ENCODE measurements at regions of chr10 and their contacts with region 1.

Region 1: GRCh38 chr10:96986200-96986856 is 154.2 kb downstream of the LCOR start:
- DNase-seq: no peak
- H3K4me3 ChIP-seq: no peak overlapping the region
- H3K27ac ChIP-seq: no peak overlapping the region
- H3K4me1 ChIP-seq: no peaks in the 10 kb centered on the region
- H3K27me3 ChIP-seq: no peaks in the 10 kb centered on the region
- CTCF ChIP-seq: no peak
- POLR2A ChIP-seq: no peak

Region 2: DNA sequence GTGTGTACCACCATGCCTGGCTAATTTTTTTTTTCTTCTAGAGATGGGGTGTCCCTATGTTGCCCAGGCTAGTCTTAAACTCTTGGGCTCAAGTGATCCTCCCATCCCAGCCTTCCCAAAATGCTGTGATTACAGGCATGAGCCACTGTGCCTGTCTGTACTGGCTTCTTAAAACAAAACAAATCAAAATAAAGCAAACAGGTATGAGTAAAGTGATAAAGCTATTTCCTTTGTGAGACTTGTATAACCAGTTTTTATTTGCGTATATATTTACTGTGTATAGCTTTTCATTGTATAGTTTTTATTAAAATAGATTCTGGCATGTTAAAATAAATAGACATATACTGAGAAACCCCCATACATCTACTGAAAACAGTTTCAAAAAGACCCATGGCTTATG is 139.9 kb before region 1 on chr10:
- CTCF ChIA-PET with region 1: no interaction called
- POLR2A ChIA-PET with region 1: no interaction called
- dilution Hi-C with region 1: no loop called
- intact Hi-C with region 1: loop called (anchors 1 kb)
- DNase-seq: no peak
- H3K4me3 ChIP-seq: no peak overlapping the region
- H3K27ac ChIP-seq: no peak overlapping the region
- H3K4me1 ChIP-seq: no peaks in the 10 kb centered on the region
- H3K27me3 ChIP-seq: no peaks in the 10 kb centered on the region
- CTCF ChIP-seq: no peak
- POLR2A ChIP-seq: no peak

Measured in endothelial cell of umbilical vein (primary cell).